ENCODE measurements at regions of chr6 and their contacts with region 1.

Region 1: DNA sequence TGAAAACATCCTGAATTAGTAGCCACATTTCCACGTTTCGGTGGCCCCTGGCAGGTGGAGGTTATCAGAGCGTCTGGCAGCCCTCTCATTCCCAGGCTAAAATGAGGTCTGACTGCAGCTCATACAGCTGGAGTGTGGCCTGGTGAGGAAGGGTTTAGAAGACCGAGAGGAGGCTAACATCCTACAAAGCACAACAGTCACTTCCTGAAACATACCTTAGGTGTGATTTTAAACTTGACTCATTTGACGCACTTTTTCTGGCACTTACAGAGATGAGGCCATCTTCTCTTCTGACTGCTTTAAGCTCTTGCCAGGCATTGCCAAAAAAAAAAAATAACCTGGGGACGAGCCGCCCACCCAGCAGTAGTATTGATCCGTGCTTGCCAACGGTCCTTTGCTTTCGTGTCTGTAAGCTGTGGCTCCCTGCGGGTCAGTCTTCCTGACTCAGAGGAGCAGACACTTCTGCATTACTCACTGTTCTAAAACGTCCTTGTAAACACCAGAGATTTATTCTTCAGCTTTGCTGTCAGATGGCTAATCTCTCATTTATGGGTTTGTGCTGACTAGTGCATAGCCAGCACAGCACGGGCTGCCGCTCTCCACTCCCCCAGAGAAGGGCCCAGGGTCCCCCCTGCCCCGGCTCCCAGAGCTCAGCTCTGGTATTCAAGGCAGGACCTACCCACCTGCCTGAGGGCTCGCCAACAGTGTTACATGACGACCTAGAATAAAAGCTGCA is 78.4 kb upstream of the FRMD1 start:
- DNase-seq: no peak
- ATAC-seq: peak in 4 of 8 donors; percentile 35 to 56 (median 42)
- H3K4me3 ChIP-seq: no peak overlapping the region
- H3K27ac ChIP-seq: no peak overlapping the region
- H3K4me1 ChIP-seq: no peaks in the 10 kb centered on the region
- H3K27me3 ChIP-seq: peaks cover 0 to 54% (median 29%) of the 10 kb centered on the region in 7 donors
- CTCF ChIP-seq: no peak

Region 2: GRCh38 chr6:168194028-168194721 is 36.7 kb after region 1 on chr6:
- intact Hi-C with region 1: no loop called
- DNase-seq: no peak
- ATAC-seq: peak in 1 of 8 donors; percentile 20
- H3K4me3 ChIP-seq: no peak overlapping the region
- H3K27ac ChIP-seq: no peak overlapping the region
- H3K4me1 ChIP-seq: no peaks in the 10 kb centered on the region
- H3K27me3 ChIP-seq: peaks cover 0 to 59% (median 28%) of the 10 kb centered on the region in 7 donors
- CTCF ChIP-seq: peak in 1 of 9 donors; percentile 11

Region 3: DNA sequence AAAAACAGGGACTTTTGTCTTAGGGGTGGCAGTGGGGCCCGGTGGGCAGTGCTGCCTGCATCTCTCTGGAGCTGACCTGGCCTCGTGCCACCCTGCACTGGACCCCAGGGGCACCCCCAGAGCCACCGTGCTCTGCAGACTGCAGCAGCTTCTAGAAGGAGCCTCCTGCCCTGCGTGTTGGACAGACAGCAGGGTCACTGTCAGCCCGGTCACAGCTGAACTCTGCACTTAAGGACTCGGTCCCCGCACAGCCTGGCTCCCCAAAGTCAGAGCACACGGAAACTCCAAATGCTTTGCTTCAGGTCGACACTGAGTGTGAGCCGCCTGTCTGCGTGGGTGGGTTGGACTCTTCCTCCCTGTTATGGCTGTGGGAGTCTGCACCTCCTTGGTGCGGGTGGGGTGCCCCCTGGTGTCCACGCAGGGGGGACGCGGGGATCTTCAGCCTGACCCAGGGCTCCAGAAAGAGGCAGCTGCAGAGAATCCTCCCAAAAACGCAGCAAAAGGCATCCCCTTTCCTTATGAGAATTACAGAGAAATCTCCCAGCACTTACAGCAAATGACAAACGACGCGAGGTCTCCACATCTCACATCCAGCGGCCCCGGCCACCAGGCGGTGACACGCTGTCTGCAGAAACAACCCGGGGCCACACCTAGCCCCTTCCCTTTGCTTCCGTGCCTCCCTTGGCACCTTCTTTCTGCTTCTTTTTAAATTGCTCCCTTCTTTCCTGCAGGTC is 198.4 kb after region 1 on chr6:
- intact Hi-C with region 1: loop called in 7 of 10 experiments (anchors 5 to 10 kb)
- DNase-seq: peak; percentile 46 to 57
- ATAC-seq: peak; percentile 71 to 96 (median 89)
- H3K4me3 ChIP-seq: no peak overlapping the region
- H3K27ac ChIP-seq: no peak overlapping the region
- H3K4me1 ChIP-seq: peaks cover 0 to 8% (median 0%) of the 10 kb centered on the region in 9 donors
- H3K27me3 ChIP-seq: peaks cover 0 to 28% (median 0%) of the 10 kb centered on the region in 7 donors
- CTCF ChIP-seq: peak; percentile 39 to 79 (median 74)

Measured in heart right ventricle (tissue), 16 donors.